ENCODE measurements at regions of chr9 and their contacts with region 1.

Region 1: DNA sequence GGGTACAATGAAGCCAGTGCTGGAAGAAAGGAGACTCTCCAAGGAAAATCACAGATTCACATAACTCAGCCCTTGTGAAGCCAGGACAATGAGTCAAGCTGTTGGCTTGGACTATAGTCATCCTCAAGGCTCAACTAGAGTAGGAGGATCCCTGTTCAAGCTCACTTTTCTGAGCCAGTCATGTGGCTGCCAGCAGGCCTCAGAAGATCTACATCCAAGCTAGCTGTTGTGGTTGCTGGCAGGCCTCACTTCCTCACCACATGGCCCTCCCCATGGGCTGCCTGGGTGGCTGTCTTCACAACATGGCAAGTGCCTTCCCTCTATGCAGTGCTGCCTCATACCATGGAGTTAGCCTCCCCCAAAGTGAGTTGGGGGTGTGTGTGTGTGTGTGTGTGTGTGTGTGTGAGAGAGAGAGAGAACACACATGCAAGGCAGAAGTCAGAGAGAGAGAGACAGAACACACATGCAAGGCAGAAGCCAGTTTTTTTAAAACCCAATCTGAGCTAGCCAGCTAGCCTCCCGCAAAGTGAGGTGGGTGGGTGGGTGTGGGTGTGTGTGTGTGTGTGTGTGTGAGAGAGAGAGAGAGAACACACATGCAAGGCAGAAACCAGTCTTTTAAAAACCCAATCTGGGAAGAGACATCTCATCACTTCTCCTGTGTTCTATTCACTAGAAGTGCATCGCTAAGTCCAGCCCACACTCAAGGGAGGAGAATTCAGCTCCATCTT is 17.1 kb downstream of the SCAI start:
- DNase-seq: peak; percentile 53 to 94 (median 82)
- ATAC-seq: peak; percentile 99 to 100
- H3K4me3 Mint-ChIP-seq: peak overlapping the region; percentile 63 to 88 (median 76)
- H3K27ac Mint-ChIP-seq: peak overlapping the region; percentile 77 to 98 (median 84)
- H3K4me1 Mint-ChIP-seq: peaks cover 12 to 43% (median 30%) of the 10 kb centered on the region in 4 donors
- H3K27me3 Mint-ChIP-seq: peaks cover 0 to 2% (median 0%) of the 10 kb centered on the region in 5 donors

Region 2: GRCh38 chr9:125143375-125144090 is 17.4 kb after region 1 on chr9 and contains the start of gene SCAI:
- POLR2A ChIA-PET with region 1: interaction called, 14 read pairs
- DNase-seq: peak; percentile 93 to 99 (median 98)
- ATAC-seq: peak; percentile 98 to 99
- H3K4me3 Mint-ChIP-seq: peak within 1 kb of the TSS; percentile 85 to 100 (median 96)
- H3K27ac Mint-ChIP-seq: peak within 1 kb of the TSS; percentile 61 to 93 (median 90)
- H3K4me1 Mint-ChIP-seq: peaks cover 16 to 39% (median 32%) of the 10 kb centered on the region in 4 donors
- H3K27me3 Mint-ChIP-seq: no peaks in the 10 kb centered on the region
- polyA plus RNA-seq, gene SCAI: 1.1 to 3.9 (median 3.7) TPM

Measured in naive thymus-derived CD8-positive, alpha-beta T cell (primary cell).